H1 (cell line): ENCODE measurements at regions of chr12 and their contacts with region 1.

Region 1: DNA sequence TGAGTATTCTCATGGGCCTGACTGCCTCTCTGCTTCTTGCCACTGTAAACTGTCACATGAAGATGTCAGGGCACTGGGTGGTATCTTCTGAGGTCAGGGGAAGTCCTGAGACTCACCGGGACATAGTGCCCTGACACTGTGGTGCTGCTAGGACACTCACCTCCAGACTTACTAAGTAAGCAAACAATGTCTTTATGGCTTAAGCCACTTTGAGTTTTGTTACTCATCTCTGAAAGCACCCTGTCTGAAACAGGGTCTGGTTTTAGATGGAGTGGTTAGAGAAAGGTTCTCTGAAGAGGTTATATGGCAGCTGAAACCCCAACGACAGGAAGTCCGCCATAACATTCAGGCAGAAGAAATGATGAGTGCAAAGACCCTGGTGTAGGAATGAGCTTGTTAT is 22.7 kb downstream of the GPR19 start:
- DNase-seq: peak in 1 of 2 experiments; percentile 39
- H3K4me3 ChIP-seq: no peak overlapping the region
- H3K27ac ChIP-seq: no peak overlapping the region
- H3K4me1 ChIP-seq: peaks cover 0 to 14% (median 7%) of the 10 kb centered on the region in 4 experiments; a peak in 6 of 7 replicates
- H3K27me3 ChIP-seq: peaks cover 15 to 32% (median 27%) of the 10 kb centered on the region in 4 experiments
- CTCF ChIP-seq: no peak
- EP300 ChIP-seq: no peak
- POLR2A ChIP-seq: no peak
- RAD21 ChIP-seq: no peak

Region 2: GRCh38 chr12:12654691-12655460 is 18.4 kb before region 1 on chr12:
- CTCF ChIA-PET with region 1: interaction called, 17 read pairs
- POLR2A ChIA-PET with region 1: interaction called, 3 read pairs
- DNase-seq: no peak
- H3K4me3 ChIP-seq: no peak overlapping the region
- H3K27ac ChIP-seq: no peak overlapping the region
- H3K4me1 ChIP-seq: peaks cover 2 to 9% (median 5%) of the 10 kb centered on the region in 4 experiments
- H3K27me3 ChIP-seq: no peaks in the 10 kb centered on the region
- CTCF ChIP-seq: no peak
- EP300 ChIP-seq: no peak
- POLR2A ChIP-seq: no peak
- RAD21 ChIP-seq: no peak

Region 3: DNA sequence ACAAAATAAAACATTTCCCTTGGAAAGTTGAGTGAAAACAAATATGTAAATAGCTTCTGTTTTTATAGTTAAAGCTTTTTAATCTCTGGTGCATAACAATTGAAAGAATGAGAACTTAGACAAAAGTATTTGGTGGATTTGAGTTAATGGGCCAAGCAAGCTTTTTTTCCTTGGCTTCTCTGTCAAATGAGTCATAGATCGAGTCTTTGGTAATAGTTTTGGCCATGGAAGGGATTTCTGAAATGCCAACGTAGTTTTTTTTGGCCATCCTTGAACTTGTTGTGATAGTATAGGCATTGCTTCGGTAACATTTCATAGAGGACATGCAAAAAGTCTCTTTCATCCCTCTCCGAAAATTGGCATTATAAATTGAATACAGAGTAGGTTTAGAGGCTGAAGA is 12.2 kb before region 1 on chr12:
- CTCF ChIA-PET with region 1: interaction called, 17 read pairs
- POLR2A ChIA-PET with region 1: interaction called, 7 read pairs
- DNase-seq: no peak
- H3K4me3 ChIP-seq: peak overlapping the region in 1 of 4 experiments; percentile 24; a peak in 1 of 8 replicates
- H3K27ac ChIP-seq: no peak overlapping the region
- H3K4me1 ChIP-seq: peaks cover 6 to 25% (median 18%) of the 10 kb centered on the region in 4 experiments
- H3K27me3 ChIP-seq: no peaks in the 10 kb centered on the region
- CTCF ChIP-seq: no peak
- EP300 ChIP-seq: no peak
- POLR2A ChIP-seq: no peak
- RAD21 ChIP-seq: no peak

Region 4: GRCh38 chr12:12684375-12685106 is 11.2 kb after region 1 on chr12:
- CTCF ChIA-PET with region 1: interaction called, 5 read pairs
- POLR2A ChIA-PET with region 1: interaction called, 16 read pairs
- DNase-seq: peak; percentile 80 to 85
- H3K4me3 ChIP-seq: peak overlapping the region; percentile 71 to 87 (median 78)
- H3K27ac ChIP-seq: peak overlapping the region; percentile 81
- H3K4me1 ChIP-seq: peaks cover 5 to 14% (median 7%) of the 10 kb centered on the region in 4 experiments; a peak in 6 of 7 replicates
- H3K27me3 ChIP-seq: peaks cover 0 to 3% (median under 1%) of the 10 kb centered on the region in 4 experiments; a peak in 2 of 7 replicates
- CTCF ChIP-seq: no peak
- EP300 ChIP-seq: peak in 1 of 2 experiments; percentile 84; a peak in 1 of 3 replicates
- POLR2A ChIP-seq: peak; percentile 58 to 90
- RAD21 ChIP-seq: no peak

Region 5: DNA sequence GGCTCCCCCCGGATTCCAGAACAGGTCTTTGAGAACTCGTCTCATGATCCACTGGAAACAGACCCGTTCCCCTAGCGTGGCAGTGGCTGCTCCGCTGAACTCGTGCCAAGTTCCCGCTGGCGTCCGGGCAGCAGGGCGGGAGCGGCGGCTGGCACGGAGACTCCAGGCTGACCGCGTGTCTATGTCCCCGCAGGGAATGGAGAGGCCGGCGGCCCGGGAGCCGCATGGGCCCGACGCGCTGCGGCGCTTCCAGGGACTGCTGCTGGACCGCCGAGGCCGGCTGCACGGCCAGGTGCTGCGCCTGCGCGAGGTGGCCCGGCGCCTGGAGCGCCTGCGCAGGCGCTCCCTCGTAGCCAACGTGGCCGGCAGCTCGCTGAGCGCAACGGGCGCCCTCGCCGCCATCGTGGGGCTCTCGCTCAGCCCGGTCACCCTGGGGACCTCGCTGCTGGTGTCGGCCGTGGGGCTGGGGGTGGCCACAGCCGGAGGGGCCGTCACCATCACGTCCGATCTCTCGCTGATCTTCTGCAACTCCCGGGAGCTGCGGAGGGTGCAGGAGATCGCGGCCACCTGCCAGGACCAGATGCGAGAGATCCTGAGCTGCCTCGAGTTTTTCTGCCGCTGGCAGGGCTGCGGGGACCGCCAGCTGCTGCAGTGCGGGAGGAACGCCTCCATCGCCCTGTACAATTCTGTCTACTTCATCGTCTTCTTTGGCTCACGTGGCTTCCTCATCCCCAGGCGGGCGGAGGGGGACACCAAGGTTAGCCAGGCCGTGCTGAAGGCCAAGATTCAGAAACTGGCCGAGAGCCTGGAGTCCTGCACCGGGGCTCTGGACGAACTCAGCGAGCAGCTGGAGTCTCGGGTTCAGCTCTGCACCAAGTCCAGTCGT is 113.7 kb after region 1 on chr12:
- CTCF ChIA-PET with region 1: no interaction called
- POLR2A ChIA-PET with region 1: no interaction called
- DNase-seq: peak; percentile 57 to 73
- H3K4me3 ChIP-seq: peak overlapping the region in 2 of 4 experiments; percentile 37 to 50; a peak in 6 of 8 replicates
- H3K27ac ChIP-seq: no peak overlapping the region
- H3K4me1 ChIP-seq: peaks cover 5 to 13% (median 11%) of the 10 kb centered on the region in 4 experiments
- H3K27me3 ChIP-seq: peaks cover 12 to 29% (median 18%) of the 10 kb centered on the region in 4 experiments
- CTCF ChIP-seq: no peak
- EP300 ChIP-seq: no peak
- POLR2A ChIP-seq: peak in 1 of 2 experiments; percentile 43; a peak in 1 of 3 replicates
- RAD21 ChIP-seq: no peak